H1 (cell line): ENCODE measurements at regions of chr17 and their contacts with region 1.

Region 1: DNA sequence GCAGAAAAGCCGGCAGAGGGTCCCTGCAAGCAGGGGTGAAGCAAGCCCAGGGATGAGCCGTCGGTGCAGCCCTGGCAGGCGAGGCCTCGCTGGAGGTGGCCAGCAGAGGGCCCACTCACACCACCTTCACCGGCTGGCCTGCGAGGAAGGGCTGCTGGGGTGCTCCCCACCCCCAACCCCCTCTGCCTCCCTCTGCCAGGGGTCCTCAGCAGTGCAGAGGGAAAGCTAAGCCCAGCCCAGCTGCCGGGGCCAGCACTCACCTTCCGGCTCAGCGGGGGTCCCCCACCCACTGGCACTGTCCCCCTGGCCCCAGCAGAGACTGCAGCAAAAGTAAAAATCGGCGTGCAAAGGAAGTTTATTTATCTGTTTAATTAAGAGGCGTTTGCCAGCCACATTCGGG is 113.4 kb downstream of the ENGASE start:
- DNase-seq: peak; percentile 38 to 89
- H3K4me3 ChIP-seq: no peak overlapping the region
- H3K27ac ChIP-seq: no peak overlapping the region
- H3K4me1 ChIP-seq: peaks cover 10 to 40% (median 26%) of the 10 kb centered on the region in 4 experiments
- H3K27me3 ChIP-seq: peaks cover 3 to 24% (median 17%) of the 10 kb centered on the region in 4 experiments
- CTCF ChIP-seq: peak; percentile 91 to 97 (median 95)
- EP300 ChIP-seq: no peak
- POLR2A ChIP-seq: no peak
- RAD21 ChIP-seq: peak; percentile 97

Region 2: GRCh38 chr17:79095345-79096055 is 92.5 kb before region 1 on chr17:
- CTCF ChIA-PET with region 1: no interaction called
- POLR2A ChIA-PET with region 1: no interaction called
- DNase-seq: no peak
- H3K4me3 ChIP-seq: no peak overlapping the region
- H3K27ac ChIP-seq: no peak overlapping the region
- H3K4me1 ChIP-seq: peaks cover 0 to 16% (median 5%) of the 10 kb centered on the region in 4 experiments; a peak in 5 of 7 replicates
- H3K27me3 ChIP-seq: no peaks in the 10 kb centered on the region
- CTCF ChIP-seq: no peak
- EP300 ChIP-seq: no peak
- POLR2A ChIP-seq: no peak
- RAD21 ChIP-seq: no peak

Region 3: DNA sequence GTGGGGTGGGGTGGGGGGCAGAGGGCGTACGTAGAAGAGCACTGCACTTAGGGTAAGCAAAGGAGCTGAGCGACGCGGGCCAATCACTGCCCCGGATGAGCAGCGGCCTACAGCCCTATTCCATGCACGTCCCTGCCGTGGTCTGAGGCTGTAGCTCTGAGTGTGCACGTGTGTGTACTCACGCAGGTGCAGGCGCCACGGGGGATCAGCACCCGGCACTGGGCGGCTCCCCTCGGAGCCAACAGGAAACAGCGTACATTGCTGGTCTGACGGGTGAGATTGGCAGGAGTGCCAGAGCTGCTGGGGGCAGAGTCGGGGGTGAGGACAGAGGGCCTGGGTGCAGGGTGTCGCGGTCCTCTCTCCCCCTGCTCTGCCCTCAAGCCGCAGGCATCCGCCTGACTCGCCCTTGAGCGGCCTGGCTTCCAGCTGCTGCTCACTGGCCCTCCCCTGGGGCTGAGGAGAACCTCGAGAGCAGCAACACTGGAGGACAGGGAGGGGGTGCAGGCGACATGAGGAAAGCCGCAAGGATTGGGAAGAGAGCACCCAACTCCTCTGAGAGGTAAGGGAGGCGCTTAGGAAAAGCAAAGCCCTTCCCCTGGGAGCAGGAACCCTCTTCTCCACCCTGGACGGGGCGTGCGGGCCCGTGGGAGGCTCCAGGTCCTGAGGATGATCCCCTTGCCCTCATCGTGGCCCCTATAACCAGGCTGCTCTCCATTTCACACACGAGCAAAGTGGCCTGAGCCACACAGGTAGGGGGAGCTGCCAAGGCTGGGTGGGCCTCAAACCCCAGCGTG is 55.6 kb before region 1 on chr17:
- CTCF ChIA-PET with region 1: no interaction called
- POLR2A ChIA-PET with region 1: no interaction called
- DNase-seq: no peak
- H3K4me3 ChIP-seq: no peak overlapping the region
- H3K27ac ChIP-seq: no peak overlapping the region
- H3K4me1 ChIP-seq: no peaks in the 10 kb centered on the region; a peak in 1 of 7 replicates
- H3K27me3 ChIP-seq: no peaks in the 10 kb centered on the region
- CTCF ChIP-seq: no peak
- EP300 ChIP-seq: no peak
- POLR2A ChIP-seq: no peak
- RAD21 ChIP-seq: no peak

Region 4: GRCh38 chr17:79174905-79175856 is 12.9 kb before region 1 on chr17:
- CTCF ChIA-PET with region 1: interaction called, 21 read pairs
- POLR2A ChIA-PET with region 1: interaction called, 3 read pairs
- DNase-seq: no peak
- H3K4me3 ChIP-seq: no peak overlapping the region
- H3K27ac ChIP-seq: no peak overlapping the region
- H3K4me1 ChIP-seq: peaks cover 0 to 3% (median 0%) of the 10 kb centered on the region in 4 experiments; a peak in 2 of 7 replicates
- H3K27me3 ChIP-seq: no peaks in the 10 kb centered on the region
- CTCF ChIP-seq: no peak
- EP300 ChIP-seq: no peak
- POLR2A ChIP-seq: no peak
- RAD21 ChIP-seq: no peak

Region 5: DNA sequence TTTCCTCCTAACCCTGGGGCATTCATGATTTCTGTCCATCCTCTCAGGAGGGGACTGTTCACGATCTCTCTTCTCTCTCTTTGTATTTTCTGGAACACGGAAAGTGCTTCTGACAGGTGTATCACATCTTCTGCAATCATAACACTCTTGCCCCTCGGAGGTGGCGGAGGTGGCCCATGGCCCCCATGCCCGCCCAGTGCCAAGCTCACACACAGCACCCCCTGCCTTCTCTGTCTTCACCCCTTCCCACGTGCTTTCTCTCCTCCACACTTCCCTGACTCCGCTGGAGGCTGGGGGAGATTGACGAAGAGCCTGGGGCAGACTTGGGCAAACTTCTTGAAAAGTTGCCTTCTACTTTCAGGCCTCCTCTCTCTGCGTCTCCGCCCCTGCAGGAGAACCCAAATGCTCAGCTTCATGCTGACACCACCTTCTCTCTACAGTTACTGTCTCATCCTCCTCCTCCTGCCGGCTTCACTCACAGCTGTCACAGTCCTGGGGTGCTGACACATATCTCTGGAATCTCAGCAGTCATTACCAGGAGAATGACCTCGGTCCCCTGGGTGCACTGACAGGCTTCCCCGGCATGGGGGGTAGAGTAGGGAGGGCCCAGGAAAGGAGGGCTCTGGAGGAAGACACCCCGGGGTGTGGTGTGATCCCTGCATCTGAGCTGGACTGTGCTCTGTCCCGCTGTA is 13.6 kb after region 1 on chr17:
- CTCF ChIA-PET with region 1: interaction called, 114 read pairs
- POLR2A ChIA-PET with region 1: interaction called, 3 read pairs
- DNase-seq: no peak
- H3K4me3 ChIP-seq: no peak overlapping the region
- H3K27ac ChIP-seq: no peak overlapping the region
- H3K4me1 ChIP-seq: peaks cover 0 to 14% (median 9%) of the 10 kb centered on the region in 4 experiments; a peak in 6 of 7 replicates
- H3K27me3 ChIP-seq: no peaks in the 10 kb centered on the region
- CTCF ChIP-seq: no peak
- EP300 ChIP-seq: no peak
- POLR2A ChIP-seq: no peak
- RAD21 ChIP-seq: no peak

Region 6: DNA sequence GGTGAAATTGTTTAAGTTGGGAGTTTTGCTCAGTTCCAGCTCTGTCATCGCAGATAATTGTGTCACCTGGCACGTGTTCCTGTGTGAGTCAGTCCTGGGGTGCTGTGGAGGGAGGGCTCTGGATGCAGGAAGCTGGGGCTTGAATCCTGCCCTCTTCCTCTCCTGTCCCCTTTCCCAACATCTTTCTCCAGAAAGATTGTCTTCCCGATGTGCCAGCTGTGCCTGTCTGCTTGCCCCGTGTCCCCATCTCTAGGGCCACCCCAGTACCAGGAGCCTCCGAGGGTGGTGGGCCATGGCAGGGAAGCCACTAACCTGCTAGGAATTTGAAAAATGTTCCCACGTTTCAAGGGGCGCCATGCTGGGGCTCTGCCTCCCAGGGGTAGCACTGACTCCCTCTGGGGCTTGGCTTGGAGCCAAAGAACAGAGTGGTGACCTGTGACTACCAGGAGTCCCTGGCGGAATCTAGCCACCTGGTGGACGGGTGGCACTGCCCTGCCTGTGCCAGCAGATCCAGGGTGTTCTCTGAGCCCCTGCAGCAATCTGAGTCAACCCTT is 84.7 kb after region 1 on chr17:
- CTCF ChIA-PET with region 1: interaction called, 14 read pairs
- POLR2A ChIA-PET with region 1: no interaction called
- DNase-seq: no peak
- H3K4me3 ChIP-seq: no peak overlapping the region
- H3K27ac ChIP-seq: no peak overlapping the region
- H3K4me1 ChIP-seq: peaks cover 0 to 17% (median 3%) of the 10 kb centered on the region in 4 experiments; a peak in 4 of 7 replicates
- H3K27me3 ChIP-seq: no peaks in the 10 kb centered on the region; a peak in 1 of 7 replicates
- CTCF ChIP-seq: no peak
- EP300 ChIP-seq: no peak
- POLR2A ChIP-seq: no peak
- RAD21 ChIP-seq: no peak

Region 7: GRCh38 chr17:79385962-79386563 is 198.0 kb after region 1 on chr17:
- CTCF ChIA-PET with region 1: interaction called, 272 read pairs
- POLR2A ChIA-PET with region 1: interaction called, 5 read pairs
- DNase-seq: no peak
- H3K4me3 ChIP-seq: no peak overlapping the region
- H3K27ac ChIP-seq: no peak overlapping the region
- H3K4me1 ChIP-seq: peaks cover 0 to 5% (median under 1%) of the 10 kb centered on the region in 4 experiments; a peak in 4 of 7 replicates
- H3K27me3 ChIP-seq: peaks cover 0 to 4% (median 0%) of the 10 kb centered on the region in 4 experiments; a peak in 3 of 7 replicates
- CTCF ChIP-seq: no peak
- EP300 ChIP-seq: no peak
- POLR2A ChIP-seq: no peak
- RAD21 ChIP-seq: no peak